ENCODE measurements at regions of chr15 and their contacts with region 1.

Region 1: DNA sequence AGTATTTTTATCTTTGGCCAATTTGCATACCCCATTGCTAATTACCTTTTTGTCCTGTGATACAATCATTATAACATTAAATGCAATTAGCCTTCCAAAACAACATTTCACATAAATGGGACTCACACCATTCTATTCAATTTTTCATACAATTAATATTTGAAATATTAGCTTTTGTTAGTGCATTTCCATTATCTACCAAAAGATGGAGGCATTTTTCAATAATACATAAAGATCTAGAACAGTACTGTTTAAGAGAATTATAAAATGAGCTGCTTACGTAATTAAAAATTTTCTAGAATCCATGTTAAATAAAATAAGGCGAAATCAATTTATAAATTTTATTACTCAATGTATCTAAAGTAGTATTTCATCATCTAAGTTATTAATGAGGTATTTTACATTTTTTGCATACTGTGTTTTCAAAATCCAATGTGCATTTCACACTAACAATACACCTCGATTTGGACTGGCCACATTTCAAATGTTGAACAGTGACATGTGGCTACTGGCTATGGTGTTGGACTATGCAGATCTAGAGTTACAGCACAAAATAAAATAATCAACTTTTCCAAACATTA is 74.3 kb downstream of the TJP1 start:
- ATAC-seq: peak in 1 of 8 experiments; percentile 14
- H3K4me3 ChIP-seq: no peak overlapping the region
- H3K27ac ChIP-seq: no peak overlapping the region
- H3K4me1 ChIP-seq: no peaks in the 10 kb centered on the region

Region 2: GRCh38 chr15:29435811-29436210 is 312.1 kb before region 1 on chr15:
- in situ Hi-C with region 1: no loop called
- ATAC-seq: peak in 2 of 8 experiments; percentile 47 to 57
- H3K4me3 ChIP-seq: no peak overlapping the region
- H3K27ac ChIP-seq: no peak overlapping the region
- H3K4me1 ChIP-seq: peaks cover 14 to 42% of the 10 kb centered on the region in 2 donors

Region 3: DNA sequence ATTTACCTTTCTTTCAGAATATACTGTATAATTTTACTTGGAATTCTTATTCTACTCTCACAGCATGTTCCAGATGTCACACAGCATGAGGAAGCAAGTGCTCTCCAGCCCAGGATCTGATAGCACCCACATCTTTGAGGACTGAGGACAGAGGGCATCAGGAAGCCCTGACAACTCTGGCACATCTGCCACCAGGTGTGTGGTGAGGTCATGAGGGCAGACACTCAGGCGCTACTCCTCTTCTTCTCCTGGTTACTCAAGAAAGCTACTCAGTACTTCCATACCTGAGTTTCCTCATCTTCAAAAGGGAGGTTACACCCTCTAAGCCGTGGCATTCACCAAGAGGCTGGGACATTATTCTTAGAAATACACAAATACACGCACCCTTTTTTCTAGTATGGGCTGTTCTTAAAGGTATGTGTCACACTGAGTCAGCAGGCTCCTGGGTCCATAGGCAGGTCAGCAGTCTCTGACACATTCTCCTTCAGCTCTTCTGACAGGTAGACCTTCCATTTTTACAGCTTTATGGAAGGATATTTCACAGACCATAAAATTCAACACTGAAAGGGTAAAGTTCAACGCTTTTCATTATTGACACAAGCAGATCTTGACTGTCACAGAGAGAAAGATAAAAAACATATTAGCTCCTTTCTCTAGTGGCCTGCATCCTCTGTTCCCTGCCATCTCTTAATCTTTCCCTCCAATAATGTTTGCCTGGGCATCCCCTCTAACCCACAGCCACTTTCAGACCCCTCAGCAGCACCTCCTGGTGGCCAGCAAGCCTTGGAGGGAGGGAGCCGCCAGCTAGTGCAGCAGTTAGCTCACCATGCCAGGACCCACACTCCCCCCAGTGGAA is 177.5 kb after region 1 on chr15:
- in situ Hi-C with region 1: loop called in 1 of 9 experiments (anchors 25 kb)
- ATAC-seq: peak; percentile 39 to 96 (median 60)
- H3K4me3 ChIP-seq: no peak overlapping the region
- H3K27ac ChIP-seq: no peak overlapping the region
- H3K4me1 ChIP-seq: peaks cover 0 to 16% of the 10 kb centered on the region in 2 donors

Measured in motor neuron (in vitro differentiated cells).